ENCODE measurements at regions of chr2 and their contacts with region 1.

Region 1: DNA sequence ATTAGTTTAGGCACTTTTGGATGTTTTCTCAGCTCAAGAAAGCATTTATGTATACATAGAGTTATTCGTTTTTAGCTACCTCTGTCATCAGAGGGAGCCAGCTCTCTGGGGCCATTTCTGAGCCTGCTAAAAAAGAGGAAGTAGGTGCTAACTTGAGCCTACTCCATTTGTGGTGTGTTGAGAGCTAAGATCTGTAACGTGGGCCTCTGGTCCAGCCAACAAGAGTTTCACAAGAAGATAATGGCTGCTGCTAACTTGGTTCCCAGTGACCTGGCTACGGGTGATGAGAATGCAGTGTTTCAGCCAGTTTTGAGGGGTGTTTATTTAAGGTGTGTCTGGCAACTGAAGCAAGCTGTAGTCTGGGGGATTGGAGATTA is 182.5 kb downstream of the PRKCE start:
- DNase-seq: no peak
- ATAC-seq: no peak
- H3K4me3 ChIP-seq: no peak overlapping the region
- H3K27ac ChIP-seq: no peak overlapping the region
- H3K4me1 ChIP-seq: peaks cover 0 to 23% (median 0%) of the 10 kb centered on the region in 12 donors
- H3K27me3 ChIP-seq: no peaks in the 10 kb centered on the region
- CTCF ChIP-seq: no peak
- POLR2A ChIP-seq: no peak

Region 2: DNA sequence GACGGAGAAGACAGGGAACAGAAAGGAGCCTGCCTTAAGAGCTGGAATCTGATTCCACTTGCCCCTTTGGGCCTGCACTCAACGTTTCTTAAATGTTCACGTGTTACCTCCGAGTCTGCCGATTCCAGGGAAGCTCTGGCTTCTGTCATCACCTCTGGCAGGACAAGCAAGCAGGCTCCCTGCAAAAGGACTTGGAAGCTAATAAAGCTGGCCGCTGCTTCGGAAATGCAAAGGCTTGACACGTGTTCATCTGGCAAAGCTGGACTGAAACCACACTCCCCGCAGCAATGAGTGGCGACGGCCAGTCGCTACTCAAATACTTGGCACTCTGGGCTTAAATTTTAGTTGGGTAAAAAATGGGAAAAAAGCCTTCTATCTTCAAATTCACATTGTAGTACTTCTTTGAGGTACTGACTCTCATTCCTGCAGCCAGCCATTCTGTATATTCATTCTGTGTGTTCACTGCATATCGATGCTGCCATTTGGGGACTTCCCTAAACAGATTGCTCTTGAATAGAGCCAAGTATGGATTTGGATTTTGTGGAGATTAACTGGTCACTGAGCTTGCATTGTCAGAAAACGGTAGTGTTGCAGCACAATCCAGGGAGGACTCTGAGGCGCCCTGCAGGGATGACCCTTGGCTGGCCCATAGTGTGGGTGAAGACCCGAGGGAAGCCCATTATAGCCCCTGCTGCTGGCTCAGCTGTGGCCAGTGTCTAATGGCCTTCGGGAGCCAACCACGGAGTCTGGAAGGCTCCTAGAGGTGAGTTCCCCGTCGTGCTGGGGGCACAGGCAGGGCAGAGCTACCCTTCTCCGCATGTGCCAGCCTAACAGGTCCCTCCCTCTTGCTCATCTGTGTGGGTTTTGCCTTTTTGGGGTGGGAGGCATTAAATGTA is 49.0 kb after region 1 on chr2:
- intact Hi-C with region 1: loop called in 1 of 10 experiments (anchors 5 kb)
- DNase-seq: peak; percentile 56 to 91 (median 69)
- ATAC-seq: peak; percentile 58 to 85 (median 72)
- H3K4me3 ChIP-seq: no peak overlapping the region
- H3K27ac ChIP-seq: peak overlapping the region in 10 of 12 donors; percentile 13 to 77 (median 33)
- H3K4me1 ChIP-seq: peaks cover 0 to 75% (median 53%) of the 10 kb centered on the region in 12 donors
- H3K27me3 ChIP-seq: no peaks in the 10 kb centered on the region
- CTCF ChIP-seq: no peak
- POLR2A ChIP-seq: no peak